ENCODE measurements at regions of chr15 and their contacts with region 1.

Region 1: GRCh38 chr15:96585484-96586386 is 255.2 kb downstream of the NR2F2 start:
- DNase-seq: no peak
- ATAC-seq: no peak
- H3K4me3 ChIP-seq: no peak overlapping the region
- H3K27ac ChIP-seq: no peak overlapping the region
- H3K4me1 ChIP-seq: no peaks in the 10 kb centered on the region
- H3K27me3 ChIP-seq: no peaks in the 10 kb centered on the region
- CTCF ChIP-seq: peak; percentile 67

Region 2: DNA sequence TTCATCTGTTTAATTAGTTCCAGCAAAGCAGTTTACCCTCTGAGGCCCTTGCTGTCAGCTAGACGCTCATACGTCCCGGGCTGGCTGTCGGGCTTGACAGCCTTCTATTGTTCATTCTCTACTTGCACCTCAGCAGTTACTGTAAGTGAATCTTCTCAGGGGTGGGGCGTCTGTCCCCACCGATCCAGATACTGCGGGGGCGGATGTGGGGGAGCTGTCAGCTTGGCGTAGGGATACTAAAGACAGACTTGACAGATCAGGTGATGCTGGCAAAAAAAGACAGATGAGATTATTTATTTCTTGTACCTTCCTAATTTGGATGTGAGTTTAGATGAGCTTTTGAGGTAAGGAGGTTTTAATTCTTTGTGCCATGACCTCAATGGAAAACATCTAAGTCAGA is 60.1 kb after region 1 on chr15:
- CTCF ChIA-PET with region 1: no interaction called
- POLR2A ChIA-PET with region 1: no interaction called
- in situ Hi-C with region 1: no loop called
- intact Hi-C with region 1: no loop called
- DNase-seq: no peak
- ATAC-seq: no peak
- H3K4me3 ChIP-seq: no peak overlapping the region
- H3K27ac ChIP-seq: no peak overlapping the region
- H3K4me1 ChIP-seq: no peaks in the 10 kb centered on the region
- H3K27me3 ChIP-seq: no peaks in the 10 kb centered on the region; the same call in 1 of the 2 replicates
- CTCF ChIP-seq: no peak

Region 3: DNA sequence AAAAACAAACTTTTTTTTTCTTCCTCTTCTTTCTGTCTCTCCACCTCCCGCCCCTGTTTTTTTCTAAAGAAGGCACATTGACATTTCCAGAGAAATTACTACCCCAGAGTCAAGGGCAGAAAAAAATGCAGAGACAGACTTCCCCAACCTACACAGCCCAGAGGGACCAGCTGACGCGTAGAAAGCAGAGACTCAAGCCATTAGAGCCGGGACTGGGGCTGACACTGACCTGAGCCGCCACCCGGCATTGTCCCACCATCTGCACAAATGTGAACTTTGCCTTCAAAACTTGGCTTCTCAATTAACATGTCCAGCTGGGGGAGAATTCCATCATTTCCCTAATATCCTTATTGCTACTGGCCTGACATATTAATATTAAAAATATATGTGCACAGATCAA is 130.3 kb after region 1 on chr15:
- CTCF ChIA-PET with region 1: no interaction called
- POLR2A ChIA-PET with region 1: no interaction called
- in situ Hi-C with region 1: no loop called
- intact Hi-C with region 1: no loop called
- DNase-seq: no peak
- ATAC-seq: no peak
- H3K4me3 ChIP-seq: no peak overlapping the region
- H3K27ac ChIP-seq: no peak overlapping the region
- H3K4me1 ChIP-seq: no peaks in the 10 kb centered on the region
- H3K27me3 ChIP-seq: no peaks in the 10 kb centered on the region
- CTCF ChIP-seq: no peak

Region 4: GRCh38 chr15:97224191-97224641 is 638.5 kb after region 1 on chr15:
- CTCF ChIA-PET with region 1: no interaction called
- POLR2A ChIA-PET with region 1: no interaction called
- in situ Hi-C with region 1: no loop called
- intact Hi-C with region 1: no loop called
- DNase-seq: no peak
- ATAC-seq: no peak
- H3K4me3 ChIP-seq: no peak overlapping the region
- H3K27ac ChIP-seq: no peak overlapping the region
- H3K4me1 ChIP-seq: no peaks in the 10 kb centered on the region
- H3K27me3 ChIP-seq: no peaks in the 10 kb centered on the region
- CTCF ChIP-seq: no peak

Region 5: GRCh38 chr15:97234851-97235610 is 649.3 kb after region 1 on chr15:
- CTCF ChIA-PET with region 1: no interaction called
- POLR2A ChIA-PET with region 1: no interaction called
- in situ Hi-C with region 1: no loop called
- intact Hi-C with region 1: loop called (anchors 10 kb)
- DNase-seq: peak; percentile 38
- ATAC-seq: peak; percentile 92
- H3K4me3 ChIP-seq: peak overlapping the region in 1 of 2 experiments; percentile 18; a peak in 1 of 4 replicates
- H3K27ac ChIP-seq: no peak overlapping the region
- H3K4me1 ChIP-seq: peaks cover 6% of the 10 kb centered on the region; the same call in 1 of the 2 replicates
- H3K27me3 ChIP-seq: no peaks in the 10 kb centered on the region
- CTCF ChIP-seq: peak; percentile 92

Measured in Panc1 (cell line).